ENCODE measurements at regions of chr4 and their contacts with region 1.

Region 1: GRCh38 chr4:75514131-75514948 is at the starts of genes RCHY1 and THAP6:
- DNase-seq: peak; percentile 82 to 95 (median 93)
- ATAC-seq: peak; percentile 92
- H3K4me3 ChIP-seq: peak within 1 kb of the TSS; percentile 79
- H3K4me3 Mint-ChIP-seq: peak within 1 kb of the TSS in 1 of 10 donors; percentile 97
- H3K27ac ChIP-seq: peak within 1 kb of the TSS; percentile 98
- H3K27ac Mint-ChIP-seq: peak within 1 kb of the TSS in 7 of 9 donors; percentile 96 to 100 (median 98)
- H3K4me1 ChIP-seq: peaks cover 53 to 56% of the 10 kb centered on the region in 2 donors
- H3K4me1 Mint-ChIP-seq: peaks cover 30 to 63% (median 49%) of the 10 kb centered on the region in 7 donors
- H3K27me3 ChIP-seq: no peaks in the 10 kb centered on the region
- H3K27me3 Mint-ChIP-seq: no peaks in the 10 kb centered on the region
- total RNA-seq, gene RCHY1: 23.0 to 37.8 (median 29.6) TPM
- total RNA-seq, gene THAP6: 18.2 to 43.9 (median 25.1) TPM

Region 2: DNA sequence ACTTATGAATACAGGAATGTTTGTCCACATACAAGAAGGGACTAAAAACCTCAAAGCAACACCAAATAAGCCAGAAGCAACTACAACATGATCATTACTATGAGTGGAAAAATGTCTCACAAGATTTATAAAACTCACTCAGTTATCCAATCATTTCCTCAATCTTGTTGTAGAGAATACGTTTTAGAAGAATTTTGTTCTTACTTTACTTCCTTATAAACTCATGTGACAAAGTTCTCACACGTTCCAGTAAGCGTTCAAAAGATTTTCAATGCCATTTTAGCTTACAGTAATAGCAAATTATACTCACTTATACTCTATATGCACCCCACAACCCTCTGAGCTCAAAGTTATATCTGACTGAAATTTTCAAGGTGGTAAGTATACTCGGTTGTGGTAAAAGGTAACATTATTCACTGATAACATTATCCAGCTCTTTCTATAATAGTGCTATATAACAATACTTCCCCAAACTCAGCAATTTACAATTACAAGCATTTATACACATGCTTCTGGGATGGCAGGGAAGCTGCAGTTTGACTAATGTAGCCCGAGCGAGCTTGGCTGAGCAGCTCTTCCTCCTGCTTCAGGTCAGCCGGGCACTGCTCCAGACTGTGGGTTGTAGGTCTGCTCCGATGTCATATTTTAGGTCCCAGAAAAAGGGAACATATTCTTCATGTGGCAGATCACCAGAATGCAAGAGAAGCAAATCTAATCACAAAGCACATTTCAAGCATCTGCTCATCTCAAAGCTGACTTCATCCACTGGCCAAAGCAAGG is 226.4 kb before region 1 on chr4:
- CTCF ChIA-PET with region 1: no interaction called
- POLR2A ChIA-PET with region 1: no interaction called
- intact Hi-C with region 1: no loop called
- DNase-seq: no peak
- ATAC-seq: no peak
- H3K4me3 ChIP-seq: no peak overlapping the region
- H3K4me3 Mint-ChIP-seq: no peak overlapping the region
- H3K27ac ChIP-seq: no peak overlapping the region
- H3K27ac Mint-ChIP-seq: no peak overlapping the region
- H3K4me1 ChIP-seq: no peaks in the 10 kb centered on the region
- H3K4me1 Mint-ChIP-seq: no peaks in the 10 kb centered on the region
- H3K27me3 ChIP-seq: no peaks in the 10 kb centered on the region
- H3K27me3 Mint-ChIP-seq: peaks cover 0 to 5% (median 0%) of the 10 kb centered on the region in 5 donors

Region 3: GRCh38 chr4:75494563-75494962 is 19.8 kb before region 1 on chr4:
- CTCF ChIA-PET with region 1: no interaction called
- POLR2A ChIA-PET with region 1: interaction called, 4 read pairs
- intact Hi-C with region 1: loop called in 1 of 2 experiments (anchors 2 kb)
- DNase-seq: no peak
- ATAC-seq: no peak
- H3K4me3 ChIP-seq: no peak overlapping the region
- H3K4me3 Mint-ChIP-seq: no peak overlapping the region
- H3K27ac ChIP-seq: no peak overlapping the region
- H3K27ac Mint-ChIP-seq: no peak overlapping the region
- H3K4me1 ChIP-seq: no peaks in the 10 kb centered on the region
- H3K4me1 Mint-ChIP-seq: peaks cover 17 to 43% (median 36%) of the 10 kb centered on the region in 7 donors
- H3K27me3 ChIP-seq: no peaks in the 10 kb centered on the region
- H3K27me3 Mint-ChIP-seq: no peaks in the 10 kb centered on the region

Region 4: GRCh38 chr4:75653845-75654503 is 139.6 kb after region 1 on chr4:
- CTCF ChIA-PET with region 1: no interaction called
- POLR2A ChIA-PET with region 1: no interaction called
- intact Hi-C with region 1: loop called in 1 of 2 experiments (anchors 1 kb)
- DNase-seq: no peak
- ATAC-seq: no peak
- H3K4me3 ChIP-seq: no peak overlapping the region
- H3K4me3 Mint-ChIP-seq: peak overlapping the region in 5 of 10 donors; percentile 31 to 61 (median 49)
- H3K27ac ChIP-seq: peak overlapping the region; percentile 82
- H3K27ac Mint-ChIP-seq: peak overlapping the region; percentile 5 to 94 (median 86)
- H3K4me1 ChIP-seq: peaks cover 19 to 36% of the 10 kb centered on the region in 2 donors
- H3K4me1 Mint-ChIP-seq: peaks cover 16 to 66% (median 51%) of the 10 kb centered on the region in 7 donors
- H3K27me3 ChIP-seq: no peaks in the 10 kb centered on the region
- H3K27me3 Mint-ChIP-seq: no peaks in the 10 kb centered on the region

Region 5: GRCh38 chr4:75995727-75996126 is 481.4 kb after region 1 on chr4:
- CTCF ChIA-PET with region 1: no interaction called
- POLR2A ChIA-PET with region 1: no interaction called
- intact Hi-C with region 1: loop called (anchors 1 kb)
- DNase-seq: peak in 7 of 9 donors; percentile 13 to 62 (median 43)
- ATAC-seq: peak; percentile 39
- H3K4me3 ChIP-seq: no peak overlapping the region
- H3K4me3 Mint-ChIP-seq: no peak overlapping the region
- H3K27ac ChIP-seq: no peak overlapping the region
- H3K27ac Mint-ChIP-seq: no peak overlapping the region
- H3K4me1 ChIP-seq: no peaks in the 10 kb centered on the region
- H3K4me1 Mint-ChIP-seq: peaks cover 0 to 10% (median 5%) of the 10 kb centered on the region in 7 donors
- H3K27me3 ChIP-seq: no peaks in the 10 kb centered on the region
- H3K27me3 Mint-ChIP-seq: peaks cover 0 to 10% (median 2%) of the 10 kb centered on the region in 5 donors

Region 6: DNA sequence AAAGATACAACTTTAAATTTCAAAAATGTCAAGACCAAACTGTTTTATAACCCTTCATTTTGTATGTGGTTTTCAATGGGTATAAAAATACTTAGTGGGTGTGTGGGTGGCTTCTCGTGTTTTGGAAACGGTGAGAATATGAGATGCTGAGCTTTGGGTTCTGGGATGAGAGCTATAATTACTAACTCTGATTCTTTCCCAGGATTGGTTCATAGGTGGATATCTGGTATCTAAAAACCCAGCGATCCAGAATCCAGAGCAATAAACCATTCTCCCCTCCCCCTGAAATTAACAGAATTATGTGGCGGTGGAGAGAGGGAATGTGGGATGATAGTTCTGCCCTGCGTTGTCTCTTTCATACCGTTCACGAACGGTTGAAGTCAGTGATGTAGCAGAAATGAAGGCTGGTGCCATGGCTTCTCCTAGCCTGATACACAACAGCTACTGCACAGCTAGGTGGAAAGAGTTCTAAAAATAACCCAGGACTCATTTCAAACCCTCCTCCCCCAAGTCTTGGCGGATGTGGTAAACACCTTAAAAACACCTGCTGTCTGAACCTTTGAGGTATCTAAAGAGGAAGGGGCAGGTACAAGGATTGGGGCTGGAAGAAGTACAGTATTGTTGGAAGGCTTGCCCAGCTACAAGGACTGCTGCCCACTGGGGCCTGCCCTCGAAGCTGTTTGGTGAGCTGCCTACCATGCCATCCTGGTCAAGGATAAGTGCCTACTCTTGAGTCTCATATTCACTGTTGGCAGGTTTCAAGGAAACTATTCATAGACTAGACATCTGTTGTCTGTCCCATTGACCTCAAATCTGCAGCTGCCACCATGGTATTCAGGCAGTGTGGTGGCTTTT is 1479.7 kb after region 1 on chr4:
- CTCF ChIA-PET with region 1: no interaction called
- POLR2A ChIA-PET with region 1: no interaction called
- intact Hi-C with region 1: loop called in 1 of 2 experiments (anchors 10 kb)
- DNase-seq: peak in 8 of 9 donors; percentile 42 to 90 (median 86)
- ATAC-seq: peak; percentile 82
- H3K4me3 ChIP-seq: peak overlapping the region; percentile 52
- H3K4me3 Mint-ChIP-seq: peak overlapping the region; percentile 56 to 94 (median 79)
- H3K27ac ChIP-seq: peak overlapping the region; percentile 19
- H3K27ac Mint-ChIP-seq: peak overlapping the region; percentile 73 to 97 (median 84)
- H3K4me1 ChIP-seq: peaks cover 28 to 50% of the 10 kb centered on the region in 2 donors
- H3K4me1 Mint-ChIP-seq: peaks cover 39 to 84% (median 59%) of the 10 kb centered on the region in 7 donors
- H3K27me3 ChIP-seq: no peaks in the 10 kb centered on the region
- H3K27me3 Mint-ChIP-seq: peaks cover 0 to 27% (median 0%) of the 10 kb centered on the region in 5 donors